ENCODE measurements at regions of chr2 and their contacts with region 1.

Region 1: GRCh38 chr2:120470041-120470965 is 124.4 kb downstream of the INHBB start:
- DNase-seq: peak; percentile 74
- ATAC-seq: peak; percentile 95

Region 2: DNA sequence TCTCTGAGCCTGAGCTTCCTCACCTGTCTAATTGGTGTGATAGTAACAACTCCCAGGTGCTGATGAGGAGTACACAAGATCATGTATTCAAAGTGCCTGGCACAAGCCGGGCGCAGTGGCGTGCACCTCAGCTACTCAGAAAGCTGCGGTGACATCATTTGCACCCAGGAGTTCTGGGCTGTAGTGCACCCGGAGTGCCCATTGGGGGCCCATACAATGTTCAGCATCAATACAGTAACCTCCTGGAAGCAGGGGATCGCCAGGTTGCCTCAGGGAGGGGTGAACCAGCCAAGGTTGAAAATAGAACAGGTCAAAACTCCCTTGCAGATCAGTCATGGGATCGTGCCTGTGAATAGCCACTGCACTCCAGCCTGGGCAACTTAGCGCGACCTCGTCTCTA is 1300.6 kb before region 1 on chr2:
- intact Hi-C with region 1: loop called (anchors 5 kb)
- DNase-seq: no peak
- ATAC-seq: no peak